HepG2 (cell line): ENCODE measurements at regions of chr6 and their contacts with region 1.

Region 1: GRCh38 chr6:150417899-150418826 is 49.4 kb downstream of the IYD start:
- DNase-seq: peak; percentile 63
- ATAC-seq: peak; percentile 89
- H3K4me3 ChIP-seq: no peak overlapping the region
- H3K27ac ChIP-seq: no peak overlapping the region
- H3K4me1 ChIP-seq: no peaks in the 10 kb centered on the region
- H3K27me3 ChIP-seq: 0 out of 5 replicates have a peak, but pooled peaks cover 0 to 5% of the 10 kb centered on the region in 2 experiments
- CTCF ChIP-seq: peak; percentile 90
- EP300 ChIP-seq: no peak
- POLR2A ChIP-seq: no peak
- RAD21 ChIP-seq: peak; percentile 79

Region 2: DNA sequence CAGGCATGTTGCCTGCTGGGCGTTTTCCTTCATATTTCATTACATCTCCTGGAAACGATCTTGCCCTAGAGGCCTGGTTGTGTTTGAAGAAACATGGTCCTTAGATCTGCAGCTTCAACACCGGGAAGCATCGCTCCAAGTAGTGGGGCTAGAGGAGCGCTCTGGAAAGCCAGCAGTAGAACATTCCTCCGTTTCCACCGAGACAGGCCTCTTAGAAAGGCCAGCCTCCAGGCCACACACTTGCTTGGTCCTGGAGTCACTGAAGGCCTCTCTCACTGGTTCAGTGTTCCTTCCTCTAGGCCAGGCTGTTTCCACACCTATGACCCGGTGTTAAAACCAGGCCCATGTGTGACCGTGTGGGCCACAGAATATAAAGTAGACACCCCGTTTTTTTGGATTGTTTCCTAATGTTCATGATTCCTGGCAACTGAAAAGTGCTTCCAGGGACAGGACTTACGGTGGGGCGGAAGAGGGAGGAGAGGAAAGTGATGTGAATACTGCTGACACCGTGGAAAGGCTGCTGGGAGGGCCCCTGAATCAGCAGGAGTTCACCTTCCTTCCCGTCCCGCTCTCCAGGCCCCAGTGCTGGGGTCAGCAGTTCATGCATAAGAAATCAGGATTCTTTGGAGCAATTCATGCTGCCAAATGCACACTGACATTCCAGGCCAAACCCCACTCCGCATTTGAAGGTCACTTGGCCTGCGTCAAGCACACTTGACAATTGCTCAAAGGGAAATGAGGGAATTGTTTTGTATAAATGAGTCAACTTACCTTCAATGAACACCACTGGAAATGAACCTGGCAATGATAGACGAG is 34.5 kb after region 1 on chr6:
- CTCF ChIA-PET with region 1: no interaction called
- POLR2A ChIA-PET with region 1: no interaction called
- in situ Hi-C with region 1: no loop called
- intact Hi-C with region 1: no loop called
- DNase-seq: no peak
- ATAC-seq: no peak
- H3K4me3 ChIP-seq: no peak overlapping the region
- H3K27ac ChIP-seq: no peak overlapping the region
- H3K4me1 ChIP-seq: no peaks in the 10 kb centered on the region
- H3K27me3 ChIP-seq: no peaks in the 10 kb centered on the region; a peak in 2 of 5 replicates
- CTCF ChIP-seq: no peak
- EP300 ChIP-seq: no peak
- POLR2A ChIP-seq: no peak
- RAD21 ChIP-seq: no peak

Region 3: GRCh38 chr6:150600301-150601017 is 182.3 kb after region 1 on chr6:
- CTCF ChIA-PET with region 1: interaction called, 11 read pairs
- POLR2A ChIA-PET with region 1: no interaction called
- in situ Hi-C with region 1: loop called (anchors 10 kb)
- intact Hi-C with region 1: no loop called
- DNase-seq: peak; percentile 50
- ATAC-seq: peak; percentile 97
- H3K4me3 ChIP-seq: peak overlapping the region; percentile 29 to 68 (median 38); a peak in 4 of 6 replicates
- H3K27ac ChIP-seq: no peak overlapping the region
- H3K4me1 ChIP-seq: peaks cover 12% of the 10 kb centered on the region; the same call in 1 of the 2 replicates
- H3K27me3 ChIP-seq: peaks cover 1 to 45% of the 10 kb centered on the region in 2 experiments; a peak in 3 of 5 replicates
- CTCF ChIP-seq: peak; percentile 59
- EP300 ChIP-seq: no peak
- POLR2A ChIP-seq: no peak
- RAD21 ChIP-seq: peak; percentile 52

Region 4: DNA sequence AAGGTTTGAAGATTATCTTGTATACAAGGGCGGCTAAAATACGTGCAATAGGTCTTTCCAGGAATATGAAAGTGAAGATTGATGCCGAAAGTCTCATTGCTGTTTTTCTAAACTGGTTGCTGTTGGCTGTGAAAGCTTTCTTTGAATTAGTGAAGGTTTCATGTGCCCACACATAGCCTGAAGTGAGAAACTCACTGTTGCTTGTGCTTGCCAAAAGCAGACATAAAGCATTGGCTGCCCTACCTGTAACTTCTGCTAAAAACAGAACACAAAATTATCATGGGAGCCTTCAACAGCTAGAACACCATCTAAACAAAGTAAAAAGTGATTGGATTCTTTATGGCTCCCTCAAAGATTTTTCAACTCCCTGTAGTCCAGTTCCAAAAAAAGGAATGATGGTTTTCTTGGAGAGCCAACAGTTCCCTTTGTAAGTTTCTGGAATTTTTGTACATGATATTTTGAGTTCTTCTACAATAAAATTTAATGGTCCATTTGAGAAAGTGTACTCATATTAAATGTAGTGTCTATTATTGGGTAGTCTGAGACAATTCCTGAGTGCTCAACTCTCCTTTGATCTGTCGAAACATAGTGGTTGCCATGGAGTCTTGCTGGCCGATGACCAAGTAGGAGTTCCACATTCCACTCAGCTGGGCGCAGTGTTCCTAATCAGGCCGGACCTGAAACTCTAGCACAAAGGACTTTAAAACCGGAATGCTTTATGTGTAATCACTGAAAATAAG is 250.0 kb after region 1 on chr6:
- CTCF ChIA-PET with region 1: no interaction called
- POLR2A ChIA-PET with region 1: no interaction called
- in situ Hi-C with region 1: no loop called
- intact Hi-C with region 1: loop called (anchors 2 kb)
- DNase-seq: peak; percentile 86
- ATAC-seq: peak; percentile 99
- H3K4me3 ChIP-seq: no peak overlapping the region
- H3K27ac ChIP-seq: no peak overlapping the region
- H3K4me1 ChIP-seq: peaks cover 16% of the 10 kb centered on the region
- H3K27me3 ChIP-seq: no peaks in the 10 kb centered on the region
- CTCF ChIP-seq: peak; percentile 43
- EP300 ChIP-seq: no peak
- POLR2A ChIP-seq: no peak
- RAD21 ChIP-seq: no peak

Region 5: GRCh38 chr6:150741633-150742504 is 323.7 kb after region 1 on chr6:
- CTCF ChIA-PET with region 1: interaction called, 20 read pairs
- POLR2A ChIA-PET with region 1: no interaction called
- in situ Hi-C with region 1: loop called (anchors 5 kb)
- intact Hi-C with region 1: no loop called
- DNase-seq: peak; percentile 19
- ATAC-seq: peak; percentile 62
- H3K4me3 ChIP-seq: no peak overlapping the region
- H3K27ac ChIP-seq: no peak overlapping the region
- H3K4me1 ChIP-seq: no peaks in the 10 kb centered on the region
- H3K27me3 ChIP-seq: 0 out of 5 replicates have a peak, but pooled peaks cover 0 to 3% of the 10 kb centered on the region in 2 experiments
- CTCF ChIP-seq: peak; percentile 43
- EP300 ChIP-seq: no peak
- POLR2A ChIP-seq: no peak
- RAD21 ChIP-seq: no peak